Cardiac septum (tissue), 1 donor: ENCODE measurements at regions of chr3 and their contacts with region 1.

Region 1: GRCh38 chr3:88058591-88059368 is at the starts of genes CGGBP1 and ZNF654:
- DNase-seq: peak; percentile 99
- total RNA-seq, gene CGGBP1: 48.5 TPM
- total RNA-seq, gene ZNF654: 14.7 TPM

Region 2: DNA sequence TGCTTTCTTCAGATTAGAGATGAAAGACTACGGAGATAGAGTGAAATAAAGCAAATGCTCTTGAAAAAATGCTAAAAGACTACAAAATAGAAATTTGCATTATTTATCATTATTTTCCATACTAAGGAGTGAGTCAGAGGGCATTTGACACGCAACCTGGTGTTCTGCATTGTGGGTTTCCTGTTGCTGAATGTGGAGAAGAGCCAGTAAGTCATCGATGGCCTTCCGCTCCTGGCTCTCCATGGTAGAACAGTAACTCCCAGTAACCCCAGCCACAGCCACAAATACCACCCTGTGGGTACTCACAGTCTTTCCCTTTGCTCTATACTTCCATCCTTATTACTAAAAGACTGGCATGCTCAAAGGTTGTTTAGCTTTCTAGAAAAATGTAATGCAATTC is 61.5 kb before region 1 on chr3:
- intact Hi-C with region 1: no loop called
- DNase-seq: no peak

Region 3: GRCh38 chr3:88105325-88105724 is 46.5 kb after region 1 on chr3:
- intact Hi-C with region 1: loop called (anchors 2 kb)
- DNase-seq: no peak

Region 4: GRCh38 chr3:88149509-88150362 is 91.0 kb after region 1 on chr3 and contains the start of gene C3orf38:
- intact Hi-C with region 1: loop called (anchors 2 kb)
- DNase-seq: peak; percentile 92
- total RNA-seq, gene C3orf38: 15.6 TPM